GM10248 (cell line): ENCODE measurements at regions of chr12 and their contacts with region 1.

Region 1: DNA sequence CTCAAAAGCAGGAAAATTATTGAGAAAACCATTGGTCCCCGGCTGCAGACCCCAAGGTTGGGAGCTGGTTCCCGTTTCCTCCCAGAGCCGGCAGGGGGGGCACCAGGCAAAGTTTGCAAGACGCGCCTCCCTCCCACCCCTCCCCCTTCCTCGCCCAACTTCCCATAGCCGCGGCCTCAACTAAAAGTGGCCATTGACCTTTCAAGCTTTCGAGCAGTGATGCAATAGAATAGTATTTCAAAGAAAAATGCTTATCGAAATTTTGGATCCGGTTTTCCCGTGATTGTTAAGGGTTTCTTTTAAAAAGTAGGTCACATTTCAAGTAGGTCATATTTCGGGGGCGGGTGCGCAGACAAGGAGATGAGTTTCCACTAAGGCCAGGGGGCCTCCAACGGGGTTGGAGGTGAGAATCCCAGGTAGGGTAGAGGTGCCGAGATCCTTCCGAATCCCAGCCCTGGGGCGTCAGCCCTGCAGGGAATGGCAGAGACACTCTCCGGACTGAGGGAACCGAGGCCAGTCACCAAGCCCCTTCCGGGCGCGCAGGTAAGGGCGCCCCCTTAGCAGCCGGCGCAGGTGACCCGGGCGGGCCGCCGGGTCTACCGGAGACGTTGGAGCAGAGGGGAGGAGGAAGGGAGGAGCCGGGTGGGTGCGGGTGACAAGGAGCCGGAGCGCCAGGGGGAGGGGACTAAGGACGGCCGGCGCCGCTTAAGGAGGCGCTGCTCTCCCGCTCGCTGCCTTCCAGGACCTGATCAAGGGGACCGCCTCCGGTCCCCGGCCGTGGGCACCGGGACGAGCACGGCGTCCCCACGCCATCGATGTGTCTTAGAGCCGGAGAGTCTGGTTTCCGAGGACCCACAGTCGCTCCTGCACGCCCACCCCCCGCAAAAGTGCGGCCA is 2.6 kb upstream of the SOCS2 start:
- DNase-seq: peak; percentile 86
- CTCF ChIP-seq: peak; percentile 76

Region 2: GRCh38 chr12:93530359-93530758 is 39.5 kb before region 1 on chr12:
- CTCF ChIA-PET with region 1: no interaction called
- POLR2A ChIA-PET with region 1: no interaction called
- DNase-seq: no peak
- CTCF ChIP-seq: no peak

Region 3: DNA sequence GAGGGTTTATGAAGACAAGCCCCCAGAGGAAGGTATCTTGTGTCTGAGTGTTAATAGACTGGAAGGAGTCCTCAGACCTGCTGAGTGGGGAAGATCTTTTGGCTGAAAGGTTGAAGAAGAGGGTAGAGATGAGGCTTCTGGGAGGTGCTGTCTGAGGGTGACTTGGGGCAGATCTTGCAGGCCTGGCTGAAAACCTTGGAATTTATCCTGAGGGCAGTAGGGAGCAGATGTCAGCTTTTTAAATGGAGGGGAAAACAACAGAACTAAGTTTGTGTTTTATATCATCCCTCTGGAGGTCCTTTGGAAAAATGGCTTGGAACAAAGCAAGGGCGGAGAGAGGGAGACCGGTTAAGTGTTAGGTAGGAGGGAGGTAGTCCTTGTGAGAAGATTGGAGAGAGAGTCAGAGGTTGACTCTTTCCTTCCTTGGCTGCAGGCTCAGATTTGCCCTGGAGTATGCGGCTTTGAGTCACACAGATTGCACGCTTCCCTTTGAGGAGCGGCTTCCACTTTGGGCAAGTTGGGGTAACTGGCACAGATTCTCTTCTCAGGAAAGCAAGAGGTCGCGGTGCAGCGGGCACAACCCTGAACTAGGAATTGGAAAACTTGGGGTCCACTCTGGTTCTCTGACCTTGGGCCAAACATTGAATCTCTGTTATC is 12.3 kb after region 1 on chr12:
- CTCF ChIA-PET with region 1: interaction called, 13 read pairs
- POLR2A ChIA-PET with region 1: no interaction called
- DNase-seq: no peak
- CTCF ChIP-seq: no peak

Region 4: GRCh38 chr12:93742110-93742934 is 172.4 kb after region 1 on chr12:
- CTCF ChIA-PET with region 1: interaction called, 13 read pairs
- POLR2A ChIA-PET with region 1: no interaction called
- DNase-seq: peak; percentile 82
- CTCF ChIP-seq: peak; percentile 65